Activated naive CD4-positive, alpha-beta T cell treated with anti-CD3 and anti-CD28 coated beads for 36 hours (primary cell): ENCODE measurements at regions of chr17 and their contacts with region 1.

Region 1: GRCh38 chr17:42183741-42184711 is 1.2 kb downstream of the HCRT start:
- DNase-seq: peak; percentile 77
- H3K4me3 Mint-ChIP-seq: peak overlapping the region; percentile 86
- H3K27ac Mint-ChIP-seq: peak overlapping the region; percentile 70
- H3K4me1 Mint-ChIP-seq: peaks cover 45% of the 10 kb centered on the region
- H3K27me3 Mint-ChIP-seq: peaks cover 22% of the 10 kb centered on the region

Region 2: GRCh38 chr17:41966463-41967140 is 217.4 kb before region 1 on chr17 and contains the start of gene CNP:
- CTCF ChIA-PET with region 1: interaction called, 3 read pairs
- intact Hi-C with region 1: loop called (anchors 2 kb)
- DNase-seq: peak; percentile 88
- H3K4me3 Mint-ChIP-seq: peak within 1 kb of the TSS; percentile 80
- H3K27ac Mint-ChIP-seq: peak within 1 kb of the TSS; percentile 86
- H3K4me1 Mint-ChIP-seq: peaks cover 38% of the 10 kb centered on the region
- H3K27me3 Mint-ChIP-seq: no peaks in the 10 kb centered on the region
- total RNA-seq, gene CNP: 58.4 to 59.1 TPM

Region 3: GRCh38 chr17:42120770-42121769 is 63.0 kb before region 1 on chr17 and contains the start of gene KAT2A:
- CTCF ChIA-PET with region 1: interaction called, 13 read pairs
- intact Hi-C with region 1: loop called (anchors 1 kb)
- DNase-seq: peak; percentile 80
- H3K4me3 Mint-ChIP-seq: peak within 1 kb of the TSS; percentile 59
- H3K27ac Mint-ChIP-seq: peak within 1 kb of the TSS; percentile 72
- H3K4me1 Mint-ChIP-seq: peaks cover 28% of the 10 kb centered on the region
- H3K27me3 Mint-ChIP-seq: no peaks in the 10 kb centered on the region
- total RNA-seq, gene KAT2A: 57.3 to 59.0 TPM

Region 4: DNA sequence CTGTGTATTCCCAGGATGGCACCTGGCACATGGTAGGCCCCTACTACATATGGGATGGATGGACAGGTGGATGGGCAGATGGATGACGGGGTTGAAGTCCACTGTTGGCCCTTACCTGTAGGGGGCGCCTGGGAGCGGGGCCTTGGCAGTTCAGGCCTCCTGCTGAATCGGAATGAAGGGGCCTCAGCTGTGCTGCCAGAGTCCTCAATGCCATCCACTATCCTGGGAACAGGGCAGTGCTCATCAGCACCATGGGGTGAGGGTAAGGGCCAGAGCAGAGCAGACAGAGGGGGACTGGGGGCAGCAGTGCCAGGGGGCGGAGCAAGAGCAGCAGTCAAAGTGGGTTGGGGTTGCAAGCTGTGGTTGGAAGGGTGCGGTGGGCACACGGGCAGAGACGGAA is 20.9 kb before region 1 on chr17:
- CTCF ChIA-PET with region 1: interaction called, 11 read pairs
- intact Hi-C with region 1: no loop called
- DNase-seq: peak; percentile 52
- H3K4me3 Mint-ChIP-seq: no peak overlapping the region
- H3K27ac Mint-ChIP-seq: no peak overlapping the region
- H3K4me1 Mint-ChIP-seq: no peaks in the 10 kb centered on the region
- H3K27me3 Mint-ChIP-seq: no peaks in the 10 kb centered on the region

Region 5: DNA sequence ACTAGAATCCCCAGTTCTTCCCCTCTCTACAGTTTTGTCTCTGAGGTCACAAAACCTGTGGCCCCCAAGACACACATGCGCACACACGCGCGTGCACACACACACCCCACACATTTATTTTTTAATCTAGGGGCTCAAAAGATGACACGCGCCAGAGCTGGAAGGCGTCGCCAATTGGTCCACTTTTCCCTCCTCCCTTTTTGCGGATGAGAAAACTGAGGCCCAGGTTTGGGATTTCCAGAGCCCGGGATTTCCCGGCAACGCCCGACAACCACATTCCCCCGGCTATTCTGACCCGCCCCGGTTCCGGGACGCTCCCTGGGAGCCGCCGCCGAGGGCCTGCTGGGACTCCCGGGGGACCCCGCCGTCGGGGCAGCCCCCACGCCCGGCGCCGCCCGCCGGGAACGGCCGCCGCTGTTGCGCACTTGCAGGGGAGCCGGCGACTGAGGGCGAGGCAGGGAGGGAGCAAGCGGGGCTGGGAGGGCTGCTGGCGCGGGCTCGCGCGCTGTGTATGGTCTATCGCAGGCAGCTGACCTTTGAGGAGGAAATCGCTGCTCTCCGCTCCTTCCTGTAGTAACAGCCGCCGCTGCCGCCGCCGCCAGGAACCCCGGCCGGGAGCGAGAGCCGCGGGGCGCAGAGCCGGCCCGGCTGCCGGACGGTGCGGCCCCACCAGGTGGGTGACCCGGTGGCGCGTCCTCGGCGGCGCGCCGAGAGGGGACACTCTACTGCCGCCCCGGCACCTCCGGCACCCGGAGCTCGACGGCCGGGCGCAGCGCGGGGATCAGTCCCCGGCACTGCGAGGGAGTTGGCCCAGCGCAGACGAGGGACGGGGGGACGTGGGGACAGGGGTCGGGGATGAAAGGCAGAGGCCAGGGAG is 104.1 kb after region 1 on chr17 and contains the start of gene STAT5A:
- CTCF ChIA-PET with region 1: no interaction called
- intact Hi-C with region 1: loop called (anchors 5 kb)
- DNase-seq: peak; percentile 88
- H3K4me3 Mint-ChIP-seq: peak within 1 kb of the TSS; percentile 86
- H3K27ac Mint-ChIP-seq: peak within 1 kb of the TSS; percentile 95
- H3K4me1 Mint-ChIP-seq: peaks cover 68% of the 10 kb centered on the region
- H3K27me3 Mint-ChIP-seq: no peaks in the 10 kb centered on the region
- total RNA-seq, gene STAT5A: 165 to 174 TPM

Region 6: DNA sequence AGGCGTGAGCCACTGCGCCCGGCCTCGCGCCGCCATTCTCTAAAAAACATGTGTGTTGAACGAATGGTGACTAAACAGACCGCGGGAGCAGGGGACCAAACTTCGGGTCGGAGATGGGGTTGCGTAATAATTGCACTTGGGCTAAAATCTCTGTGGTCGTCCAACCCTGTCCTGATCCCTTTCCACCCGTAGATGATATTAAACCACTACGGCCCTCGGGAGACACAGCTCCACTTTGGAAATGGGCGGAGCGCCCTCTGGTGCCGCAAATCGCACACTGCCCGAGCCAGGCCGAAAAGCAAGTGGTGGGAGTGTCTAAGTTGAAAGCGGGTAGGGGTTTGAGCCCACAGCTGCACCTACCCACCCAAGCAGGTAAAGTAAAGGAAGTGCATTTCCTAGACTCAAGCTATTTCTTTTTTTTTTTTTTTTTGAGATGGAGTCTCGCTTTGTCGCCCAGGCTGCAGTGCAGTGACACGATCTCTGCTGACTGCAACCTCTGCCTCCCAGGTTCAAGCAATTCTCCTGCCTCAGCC is 222.0 kb after region 1 on chr17:
- CTCF ChIA-PET with region 1: interaction called, 3 read pairs
- intact Hi-C with region 1: loop called (anchors 1 kb)
- DNase-seq: peak; percentile 90
- H3K4me3 Mint-ChIP-seq: no peak overlapping the region
- H3K27ac Mint-ChIP-seq: no peak overlapping the region
- H3K4me1 Mint-ChIP-seq: peaks cover 22% of the 10 kb centered on the region
- H3K27me3 Mint-ChIP-seq: no peaks in the 10 kb centered on the region